Left ventricle myocardium superior (tissue), 1 donor: ENCODE measurements at regions of chr2 and their contacts with region 1.

Region 1: DNA sequence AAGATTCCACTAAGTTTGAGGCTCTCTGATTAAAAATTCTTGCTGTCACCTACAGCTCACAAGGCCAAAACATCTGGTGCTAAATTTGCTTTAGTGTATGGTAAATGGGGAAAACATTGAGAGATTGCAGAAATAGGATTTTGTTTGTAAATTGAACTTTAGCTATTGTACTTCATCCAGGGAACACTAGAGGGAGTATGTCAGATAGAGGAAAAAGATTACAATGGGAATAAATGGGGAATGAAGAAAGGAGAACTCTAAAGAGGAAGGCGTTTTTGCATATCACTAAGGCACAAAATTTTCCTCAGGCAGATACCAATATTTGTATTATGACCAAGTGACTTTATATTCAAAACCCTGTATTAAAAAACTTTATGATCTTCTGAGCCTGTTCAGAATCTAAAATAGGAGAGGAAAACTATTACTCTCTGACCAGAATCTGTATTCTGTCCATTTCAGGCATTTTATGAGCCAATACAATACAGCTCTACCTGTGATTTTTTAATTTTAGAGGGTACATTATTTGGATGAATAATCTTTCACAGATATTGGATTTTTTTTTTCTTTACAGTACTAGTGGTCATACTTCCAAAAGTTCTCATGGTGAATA is 52.3 kb upstream of the ITGB6 start:
- DNase-seq: no peak
- ATAC-seq: peak; percentile 40

Region 2: DNA sequence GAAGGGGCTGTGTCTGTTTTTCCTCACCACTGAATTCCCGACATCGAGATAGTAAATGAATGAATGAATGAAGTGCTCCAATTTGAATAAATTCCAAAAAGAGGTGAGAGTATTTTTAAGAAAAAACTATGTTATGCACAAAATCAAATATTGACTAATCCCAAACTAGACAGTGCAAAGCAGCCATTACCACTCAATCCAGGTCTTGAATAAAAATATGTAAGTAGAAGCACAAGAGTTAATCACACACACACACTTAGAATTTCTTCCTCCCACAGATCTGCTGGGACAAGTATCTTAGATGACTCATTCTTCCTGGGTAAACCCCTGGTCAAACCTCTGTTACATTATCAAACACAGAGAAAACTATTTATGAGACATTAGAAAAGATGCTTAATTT is 292.0 kb before region 1 on chr2:
- intact Hi-C with region 1: no loop called
- DNase-seq: no peak
- ATAC-seq: peak; percentile 33

Region 3: GRCh38 chr2:160968182-160968581 is 715.8 kb after region 1 on chr2:
- intact Hi-C with region 1: loop called (anchors 10 kb)
- DNase-seq: no peak
- ATAC-seq: no peak